OCI-LY7 (cell line): ENCODE measurements at regions of chr20 and their contacts with region 1.

Region 1: DNA sequence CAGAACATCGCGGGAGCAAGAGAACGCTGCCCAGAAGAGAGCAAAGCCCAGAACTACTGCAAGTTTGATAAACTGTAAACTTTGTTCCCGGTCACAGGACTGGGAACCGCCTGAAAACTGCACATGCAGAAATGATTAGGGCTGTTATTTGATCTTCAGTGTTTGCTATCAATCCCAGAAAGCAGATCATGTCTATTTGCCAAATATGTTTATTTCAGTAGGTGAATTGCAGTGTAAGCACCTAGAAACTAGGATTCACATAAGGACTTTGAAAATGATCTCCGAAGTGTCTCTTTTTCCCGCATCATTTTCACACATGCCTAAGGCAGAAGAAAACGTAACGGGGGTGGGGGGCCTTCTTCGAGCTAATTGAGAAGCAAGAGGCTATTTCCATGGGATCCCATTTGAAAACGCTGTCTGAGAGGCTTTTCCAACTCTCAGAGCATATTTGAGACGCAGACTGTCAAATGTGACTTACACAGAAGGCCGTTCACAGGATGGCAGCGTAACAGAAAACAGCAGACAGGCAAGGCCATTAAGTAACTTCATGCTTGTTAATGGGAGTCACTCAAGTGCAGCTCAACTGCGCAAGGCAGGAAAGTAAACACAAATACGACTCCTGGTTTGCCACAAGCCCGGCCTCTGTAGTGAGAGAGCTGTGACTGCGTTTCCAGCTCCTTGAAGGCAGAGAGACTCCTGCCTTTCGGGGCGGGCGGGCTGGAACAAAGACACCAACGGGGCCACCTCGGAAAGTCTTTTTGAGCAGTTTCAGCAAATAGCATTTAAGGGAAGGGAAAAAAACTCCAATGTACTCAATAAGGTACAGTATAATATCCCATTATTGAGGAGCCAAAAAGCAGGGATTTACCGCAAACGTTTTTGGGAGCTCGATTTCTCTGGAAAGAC is 144.7 kb upstream of the ZNF217 start:
- DNase-seq: peak; percentile 48
- H3K4me3 ChIP-seq: peak overlapping the region; percentile 56
- H3K27ac ChIP-seq: peak overlapping the region; percentile 11
- H3K4me1 ChIP-seq: peaks cover 65% of the 10 kb centered on the region
- CTCF ChIP-seq: no peak

Region 2: GRCh38 chr20:53559816-53560215 is 178.5 kb before region 1 on chr20:
- CTCF ChIA-PET with region 1: no interaction called
- POLR2A ChIA-PET with region 1: no interaction called
- intact Hi-C with region 1: no loop called
- DNase-seq: no peak
- H3K4me3 ChIP-seq: no peak overlapping the region
- H3K27ac ChIP-seq: no peak overlapping the region
- H3K4me1 ChIP-seq: no peaks in the 10 kb centered on the region
- CTCF ChIP-seq: no peak

Region 3: DNA sequence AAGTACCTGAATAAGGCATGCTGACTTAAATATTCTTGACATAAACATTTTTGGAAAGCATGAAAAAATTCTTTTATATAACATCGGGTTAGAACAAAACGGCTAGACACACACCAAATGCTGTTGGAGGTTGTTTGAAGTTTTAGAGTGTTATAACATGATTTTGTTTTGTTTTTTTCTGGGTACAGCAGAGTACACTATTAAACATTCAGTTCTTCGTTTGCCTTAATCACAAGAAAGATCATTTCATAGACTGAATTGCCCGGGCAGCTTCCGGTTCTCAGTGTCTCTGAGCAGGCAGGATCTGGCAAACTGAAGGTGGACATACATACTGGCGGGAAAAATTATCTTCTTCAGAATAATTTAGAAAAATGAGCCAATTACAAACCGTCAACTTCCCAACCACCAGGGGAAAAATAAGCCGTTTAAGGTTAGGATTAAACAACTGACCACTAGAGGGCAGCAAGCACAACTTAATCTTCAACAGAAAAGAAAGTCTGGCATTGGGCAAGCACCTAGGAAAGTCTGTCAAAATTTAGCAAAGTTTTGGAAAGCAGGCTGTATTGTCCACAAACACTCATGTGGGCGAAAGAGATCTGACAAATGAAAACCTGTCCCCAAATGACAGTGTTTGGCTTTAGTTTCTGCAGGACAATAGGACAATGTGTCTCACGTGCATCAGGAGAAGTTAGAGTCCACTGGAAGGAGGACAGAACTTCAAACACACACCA is 159.6 kb before region 1 on chr20:
- CTCF ChIA-PET with region 1: no interaction called
- POLR2A ChIA-PET with region 1: no interaction called
- intact Hi-C with region 1: loop called (anchors 1 kb)
- DNase-seq: peak; percentile 93
- H3K4me3 ChIP-seq: peak overlapping the region; percentile 68
- H3K27ac ChIP-seq: peak overlapping the region; percentile 96
- H3K4me1 ChIP-seq: peaks cover 58% of the 10 kb centered on the region
- CTCF ChIP-seq: peak; percentile 97

Region 4: DNA sequence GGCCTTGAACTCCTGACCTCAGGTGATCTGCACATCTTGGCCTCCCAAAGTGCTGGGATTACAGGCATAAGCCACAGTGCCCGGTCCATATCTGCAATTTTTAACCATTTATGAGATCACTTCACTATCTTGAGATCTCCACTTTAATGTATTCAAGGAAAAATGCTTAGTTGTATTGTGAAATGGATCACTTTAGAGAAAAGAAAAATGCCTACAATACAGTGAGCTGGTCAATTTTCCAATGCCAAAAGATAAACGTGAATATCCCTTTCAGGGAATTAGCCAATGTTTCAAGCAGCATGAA is 61.8 kb before region 1 on chr20:
- CTCF ChIA-PET with region 1: no interaction called
- POLR2A ChIA-PET with region 1: no interaction called
- intact Hi-C with region 1: no loop called
- DNase-seq: no peak
- H3K4me3 ChIP-seq: no peak overlapping the region
- H3K27ac ChIP-seq: no peak overlapping the region
- H3K4me1 ChIP-seq: peaks cover 22% of the 10 kb centered on the region
- CTCF ChIP-seq: no peak

Region 5: DNA sequence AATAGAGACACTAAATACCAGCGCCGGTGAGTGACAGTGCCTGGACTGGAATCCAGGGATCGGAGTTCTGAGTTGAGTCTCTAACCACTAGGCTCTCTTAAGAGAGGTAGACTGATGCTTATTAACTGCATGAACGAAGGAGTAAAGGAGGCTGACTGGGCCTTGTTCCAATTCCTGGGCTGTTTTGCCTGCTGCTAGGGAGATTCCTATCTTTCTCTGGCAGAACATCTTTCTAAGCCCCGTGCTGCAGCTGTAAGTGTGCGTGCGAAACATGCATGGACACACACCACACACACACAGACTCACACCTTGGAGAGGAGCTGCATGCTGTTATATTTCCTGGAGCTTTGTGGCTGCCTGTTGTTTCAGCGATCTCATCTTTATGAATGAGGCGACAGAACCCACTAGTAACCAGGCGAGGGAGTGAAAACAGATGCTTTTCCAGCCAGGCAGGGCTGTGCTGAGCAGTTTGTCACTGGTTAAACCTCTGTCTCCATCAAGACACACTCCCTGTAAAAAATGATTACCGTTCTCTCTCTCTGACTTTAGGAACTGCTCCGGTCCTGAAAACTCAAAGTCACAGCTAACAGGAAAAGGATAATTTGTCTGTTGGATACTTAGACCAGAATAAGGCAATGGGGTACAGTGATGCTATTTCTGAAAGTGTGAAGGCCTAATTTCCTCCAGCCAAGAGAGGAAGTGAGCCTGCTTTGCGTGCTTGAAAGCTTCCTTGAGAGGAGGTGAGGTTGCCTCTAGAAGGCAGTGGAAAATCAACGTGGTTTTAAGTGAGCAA is 12.7 kb after region 1 on chr20:
- CTCF ChIA-PET with region 1: interaction called, 4 read pairs
- POLR2A ChIA-PET with region 1: interaction called, 21 read pairs
- intact Hi-C with region 1: no loop called
- DNase-seq: peak; percentile 86
- H3K4me3 ChIP-seq: peak overlapping the region; percentile 27
- H3K27ac ChIP-seq: peak overlapping the region; percentile 73
- H3K4me1 ChIP-seq: peaks cover 56% of the 10 kb centered on the region
- CTCF ChIP-seq: 0 out of 2 replicates have a peak, but pooled peaks have one; percentile 16

Region 6: DNA sequence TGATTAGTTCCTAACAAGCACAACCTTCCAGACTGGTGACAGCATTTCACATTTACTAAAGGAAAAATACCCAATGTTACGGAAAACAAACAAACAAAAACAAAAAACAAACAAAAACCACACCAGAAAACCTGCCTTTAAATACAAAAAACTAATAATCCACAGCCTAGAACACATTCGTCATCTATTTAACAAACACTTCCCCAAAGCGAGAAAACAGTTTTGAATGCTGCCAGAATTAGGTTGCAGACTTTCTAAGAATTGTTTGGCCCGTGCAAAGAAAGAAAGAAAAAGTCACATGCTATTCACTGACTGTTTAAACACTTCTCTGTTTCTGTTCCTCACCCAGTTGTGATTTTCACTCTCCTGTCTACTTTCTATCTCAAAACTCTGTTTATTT is 279.5 kb after region 1 on chr20:
- CTCF ChIA-PET with region 1: no interaction called
- POLR2A ChIA-PET with region 1: no interaction called
- intact Hi-C with region 1: no loop called
- DNase-seq: peak; percentile 26
- H3K4me3 ChIP-seq: no peak overlapping the region
- H3K27ac ChIP-seq: no peak overlapping the region
- H3K4me1 ChIP-seq: peaks cover 7% of the 10 kb centered on the region
- CTCF ChIP-seq: no peak